A549 (cell line): ENCODE measurements at regions of chr17 and their contacts with region 1.

Region 1: DNA sequence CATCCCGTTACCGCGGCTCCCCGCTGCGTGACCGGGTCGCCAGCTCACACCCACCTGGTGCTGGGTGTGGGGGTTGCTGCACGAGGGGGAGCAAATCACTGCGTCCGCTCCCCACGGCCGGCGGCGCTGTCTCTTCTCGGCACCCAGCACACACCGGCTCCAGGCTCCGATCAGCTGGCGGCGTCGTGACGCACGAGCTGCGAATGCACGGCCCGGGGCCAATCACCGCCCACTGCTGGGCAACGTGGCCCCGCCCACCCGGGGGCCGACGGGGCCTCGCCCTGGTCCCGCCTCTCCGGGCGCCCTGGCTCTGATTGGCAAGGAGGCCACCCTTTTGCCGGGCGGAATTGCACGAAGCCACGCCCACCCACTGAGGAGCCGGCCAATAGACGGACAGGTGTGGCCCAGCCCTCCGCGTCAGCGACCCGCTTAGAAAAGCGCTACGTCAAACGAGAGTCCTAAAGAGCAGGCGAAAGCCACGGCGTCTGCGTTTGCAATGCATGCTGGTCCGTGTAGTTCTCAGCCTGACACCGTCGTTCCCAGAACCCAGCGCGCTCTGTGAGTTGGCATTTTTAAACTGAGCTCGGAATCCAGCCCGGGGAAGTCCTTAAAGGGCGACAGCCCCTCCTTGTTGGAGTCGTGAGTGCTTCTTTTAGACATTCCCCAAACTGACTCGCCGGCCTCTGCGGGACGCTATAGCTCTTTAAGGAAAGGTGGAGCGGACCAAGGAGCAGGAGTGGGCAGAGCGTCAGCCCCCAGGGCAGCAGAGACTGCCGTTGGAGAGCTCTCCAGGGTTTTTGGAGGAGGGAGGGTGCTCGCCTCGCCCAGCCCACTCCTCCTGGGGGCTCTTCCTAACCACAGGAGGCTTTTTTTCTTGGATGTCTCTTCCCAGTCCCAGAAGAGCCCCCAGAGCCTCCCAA is 6.2 kb upstream of the TLCD2 start:
- DNase-seq: peak; percentile 100
- ATAC-seq: peak; percentile 55 to 76
- H3K4me3 ChIP-seq: peak overlapping the region; percentile 87
- H3K27ac ChIP-seq: peak overlapping the region; percentile 95 to 100
- H3K4me1 ChIP-seq: peaks cover 48% of the 10 kb centered on the region
- CTCF ChIP-seq: 0 out of 3 replicates have a peak, but pooled peaks have one; percentile 5
- EP300 ChIP-seq: no peak
- POLR2A ChIP-seq: peak; percentile 97
- RAD21 ChIP-seq: no peak

Region 2: GRCh38 chr17:1673041-1673785 is 43.1 kb before region 1 on chr17:
- CTCF ChIA-PET with region 1: interaction called, 43 read pairs
- POLR2A ChIA-PET with region 1: interaction called, 22 read pairs
- DNase-seq: no peak
- ATAC-seq: no peak; a peak in 1 of 6 replicates
- H3K4me3 ChIP-seq: no peak overlapping the region
- H3K27ac ChIP-seq: no peak overlapping the region
- H3K4me1 ChIP-seq: no peaks in the 10 kb centered on the region
- CTCF ChIP-seq: no peak
- EP300 ChIP-seq: no peak
- POLR2A ChIP-seq: no peak
- RAD21 ChIP-seq: no peak

Region 3: DNA sequence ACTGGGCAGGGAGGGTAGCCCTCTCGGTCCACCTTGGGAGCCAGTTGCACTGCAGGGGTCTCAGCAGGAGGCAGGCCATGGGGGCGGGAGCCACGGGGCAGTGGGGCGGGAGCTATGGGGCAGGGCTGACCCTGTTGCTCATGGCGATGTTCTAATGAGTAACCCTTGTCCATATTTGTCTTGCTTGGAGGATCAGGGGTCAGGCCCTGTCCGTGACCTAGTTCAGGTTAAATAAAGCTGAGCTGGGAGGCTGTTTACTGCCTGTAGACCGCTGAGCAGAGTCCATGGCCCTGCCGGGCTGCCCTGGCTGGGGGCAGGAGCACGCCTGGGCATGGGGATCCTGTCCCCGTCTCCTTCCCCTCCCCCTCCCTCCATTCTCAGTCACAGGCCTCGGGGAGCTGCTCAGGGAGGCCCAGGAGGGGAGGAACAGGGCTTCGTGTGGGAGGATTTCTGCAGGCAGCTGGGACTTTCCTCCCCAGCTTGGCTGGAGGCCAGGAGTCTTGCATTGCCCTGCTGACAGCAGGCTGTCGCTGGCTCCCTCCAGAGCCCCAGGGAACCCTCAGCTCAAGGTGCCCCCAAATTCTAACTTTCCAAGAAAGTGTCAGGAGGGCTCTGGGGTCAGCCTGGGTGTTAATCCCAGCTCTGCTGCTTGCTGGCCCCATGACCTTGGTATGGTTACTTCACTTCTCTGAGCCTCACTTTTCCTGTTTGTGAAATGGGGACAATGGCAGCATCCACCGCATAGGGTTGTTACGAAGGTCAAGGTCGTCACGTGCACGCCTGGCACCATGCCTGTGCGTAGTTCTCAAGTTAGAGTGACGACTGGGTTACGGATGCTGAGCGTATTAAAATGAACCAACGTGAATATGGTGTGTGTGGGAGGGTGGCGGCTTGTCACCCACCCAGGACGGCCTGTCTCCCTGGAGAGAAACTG is 20.3 kb after region 1 on chr17:
- CTCF ChIA-PET with region 1: interaction called, 72 read pairs
- POLR2A ChIA-PET with region 1: interaction called, 8 read pairs
- DNase-seq: peak; percentile 66 to 67
- ATAC-seq: peak; percentile 40 to 78
- H3K4me3 ChIP-seq: no peak overlapping the region
- H3K27ac ChIP-seq: peak overlapping the region; percentile 53 to 84
- H3K4me1 ChIP-seq: peaks cover 20% of the 10 kb centered on the region
- CTCF ChIP-seq: no peak
- EP300 ChIP-seq: no peak
- POLR2A ChIP-seq: no peak
- RAD21 ChIP-seq: no peak

Region 4: DNA sequence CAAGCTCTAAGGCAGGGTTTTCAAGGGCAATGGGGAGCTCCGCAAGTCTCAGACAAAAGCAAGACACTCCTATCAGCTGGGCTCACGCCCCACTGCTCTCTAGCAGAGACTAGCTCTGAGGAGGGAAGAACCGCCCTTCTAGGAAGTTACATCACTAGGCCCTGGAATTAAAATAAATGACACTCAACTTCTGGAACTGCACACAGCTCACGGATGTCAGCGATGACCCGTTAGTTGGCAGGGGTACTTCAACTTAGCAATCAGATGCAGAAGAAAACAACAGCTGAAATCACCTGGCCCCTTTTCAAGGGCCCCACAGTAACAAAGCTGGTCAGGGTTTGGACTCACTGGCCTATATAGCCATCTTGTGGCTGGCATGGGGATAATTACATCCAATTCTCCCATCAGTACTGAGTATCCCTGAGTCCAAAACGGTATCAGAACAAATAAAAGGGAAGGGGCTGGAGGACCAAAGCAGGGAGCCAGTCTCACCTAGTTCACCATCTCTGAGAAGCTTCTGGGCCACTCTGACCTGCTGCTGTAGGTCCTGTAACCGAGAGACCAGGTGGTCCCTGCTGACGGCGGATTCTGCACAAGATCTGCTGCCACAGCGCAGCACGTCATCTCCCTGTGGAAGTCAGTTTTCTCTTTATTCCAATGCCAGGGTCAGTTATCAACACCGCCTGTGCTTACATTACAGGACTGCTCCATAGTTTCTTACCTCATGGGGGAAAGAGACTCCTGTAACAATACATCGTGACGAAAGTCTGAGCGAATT is 67.7 kb after region 1 on chr17:
- CTCF ChIA-PET with region 1: interaction called, 591 read pairs
- POLR2A ChIA-PET with region 1: interaction called, 30 read pairs
- DNase-seq: peak; percentile 68 to 77
- ATAC-seq: peak; percentile 78 to 86
- H3K4me3 ChIP-seq: no peak overlapping the region
- H3K27ac ChIP-seq: 0 out of 6 replicates have a peak overlapping the region, but pooled peaks of 1 of the 2 experiments have one; percentile 6
- H3K4me1 ChIP-seq: peaks cover 23% of the 10 kb centered on the region
- CTCF ChIP-seq: peak; percentile 77
- EP300 ChIP-seq: no peak
- POLR2A ChIP-seq: no peak
- RAD21 ChIP-seq: peak; percentile 85 to 93

Region 5: GRCh38 chr17:1829592-1830257 is 113.4 kb after region 1 on chr17 and contains the starts of genes RPA1 and SMYD4:
- CTCF ChIA-PET with region 1: interaction called, 3 read pairs
- POLR2A ChIA-PET with region 1: interaction called, 13 read pairs
- DNase-seq: peak; percentile 89 to 98
- ATAC-seq: peak; percentile 98 to 100
- H3K4me3 ChIP-seq: peak within 1 kb of the TSS; percentile 76
- H3K27ac ChIP-seq: peak within 1 kb of the TSS; percentile 89
- H3K4me1 ChIP-seq: peaks cover 13% of the 10 kb centered on the region; the same call in 2 of the 3 replicates
- CTCF ChIP-seq: no peak
- EP300 ChIP-seq: no peak
- POLR2A ChIP-seq: peak; percentile 86
- RAD21 ChIP-seq: no peak
- polyA plus RNA-seq, gene RPA1: 136 and 145 TPM in 2 replicates
- polyA plus RNA-seq, gene SMYD4: 12.1 and 12.4 TPM in 2 replicates

Region 6: GRCh38 chr17:2041561-2042366 is 325.4 kb after region 1 on chr17 and contains the start of gene OVCA2:
- CTCF ChIA-PET with region 1: interaction called, 4 read pairs
- POLR2A ChIA-PET with region 1: interaction called, 10 read pairs
- DNase-seq: peak; percentile 94 to 96
- ATAC-seq: peak; percentile 82 to 91
- H3K4me3 ChIP-seq: peak within 1 kb of the TSS; percentile 85
- H3K27ac ChIP-seq: peak within 1 kb of the TSS; percentile 93 to 99
- H3K4me1 ChIP-seq: peaks cover 24% of the 10 kb centered on the region
- CTCF ChIP-seq: peak; percentile 47
- EP300 ChIP-seq: no peak
- POLR2A ChIP-seq: peak; percentile 71
- RAD21 ChIP-seq: peak; percentile 56 to 61
- polyA plus RNA-seq, gene OVCA2: 66.3 and 73.1 TPM in 2 replicates